Mammary epithelial cell (primary cell): ENCODE measurements at regions of chr4 and their contacts with region 1.

Region 1: DNA sequence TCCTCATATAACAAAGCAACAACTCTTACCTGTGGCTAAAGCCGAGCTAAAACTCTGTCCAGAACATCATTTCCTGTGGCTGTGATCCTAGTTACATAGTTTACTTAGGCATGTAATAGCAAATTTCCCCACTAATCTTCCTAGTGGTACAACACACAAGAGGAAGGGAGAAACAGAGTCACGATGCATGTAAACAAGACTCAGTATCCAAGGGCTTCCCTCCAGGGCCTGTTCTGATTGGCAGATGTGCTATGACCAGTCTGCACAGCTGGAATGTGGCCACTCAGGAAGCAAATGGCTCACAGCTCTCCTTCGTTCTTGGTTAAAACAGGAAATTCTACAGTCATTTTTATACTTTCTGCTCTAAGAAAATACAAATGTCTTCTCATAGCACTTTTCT is 49.2 kb upstream of the PRSS48 start:
- DNase-seq: peak; percentile 84
- H3K4me3 ChIP-seq: peak overlapping the region; percentile 0 to 33 (median 14)
- H3K27ac ChIP-seq: peak overlapping the region; percentile 95
- H3K4me1 ChIP-seq: peaks cover 24% of the 10 kb centered on the region
- H3K27me3 ChIP-seq: no peaks in the 10 kb centered on the region
- CTCF ChIP-seq: no peak

Region 2: GRCh38 chr4:151139814-151140213 is 87.9 kb before region 1 on chr4:
- CTCF ChIA-PET with region 1: no interaction called
- dilution Hi-C with region 1: no loop called
- in situ Hi-C with region 1: no loop called
- intact Hi-C with region 1: no loop called
- DNase-seq: no peak
- H3K4me3 ChIP-seq: no peak overlapping the region
- H3K27ac ChIP-seq: no peak overlapping the region
- H3K4me1 ChIP-seq: no peaks in the 10 kb centered on the region
- H3K27me3 ChIP-seq: no peaks in the 10 kb centered on the region
- CTCF ChIP-seq: no peak

Region 3: DNA sequence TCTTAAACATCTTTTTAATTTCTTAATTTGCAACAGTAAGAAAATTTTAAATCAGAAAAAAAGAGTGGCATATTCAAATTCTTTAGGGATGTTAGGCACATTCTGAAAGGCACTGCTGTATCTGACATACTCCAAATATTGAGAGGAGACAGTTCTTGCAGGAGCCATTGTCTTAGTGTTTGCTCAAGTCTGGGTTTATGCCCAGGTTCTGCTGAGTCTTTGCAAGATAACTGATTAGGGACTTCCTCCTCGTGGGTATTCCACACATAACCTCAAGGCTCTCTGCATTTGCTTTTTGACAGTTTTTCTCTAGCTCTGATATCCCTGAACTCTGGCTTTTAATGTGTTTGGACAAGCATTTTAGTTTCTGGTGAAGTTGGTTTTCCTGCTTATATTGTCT is 75.7 kb before region 1 on chr4:
- CTCF ChIA-PET with region 1: no interaction called
- dilution Hi-C with region 1: loop called (anchors 5 kb)
- in situ Hi-C with region 1: no loop called
- intact Hi-C with region 1: no loop called
- DNase-seq: no peak
- H3K4me3 ChIP-seq: no peak overlapping the region
- H3K27ac ChIP-seq: no peak overlapping the region
- H3K4me1 ChIP-seq: no peaks in the 10 kb centered on the region
- H3K27me3 ChIP-seq: no peaks in the 10 kb centered on the region
- CTCF ChIP-seq: no peak

Region 4: DNA sequence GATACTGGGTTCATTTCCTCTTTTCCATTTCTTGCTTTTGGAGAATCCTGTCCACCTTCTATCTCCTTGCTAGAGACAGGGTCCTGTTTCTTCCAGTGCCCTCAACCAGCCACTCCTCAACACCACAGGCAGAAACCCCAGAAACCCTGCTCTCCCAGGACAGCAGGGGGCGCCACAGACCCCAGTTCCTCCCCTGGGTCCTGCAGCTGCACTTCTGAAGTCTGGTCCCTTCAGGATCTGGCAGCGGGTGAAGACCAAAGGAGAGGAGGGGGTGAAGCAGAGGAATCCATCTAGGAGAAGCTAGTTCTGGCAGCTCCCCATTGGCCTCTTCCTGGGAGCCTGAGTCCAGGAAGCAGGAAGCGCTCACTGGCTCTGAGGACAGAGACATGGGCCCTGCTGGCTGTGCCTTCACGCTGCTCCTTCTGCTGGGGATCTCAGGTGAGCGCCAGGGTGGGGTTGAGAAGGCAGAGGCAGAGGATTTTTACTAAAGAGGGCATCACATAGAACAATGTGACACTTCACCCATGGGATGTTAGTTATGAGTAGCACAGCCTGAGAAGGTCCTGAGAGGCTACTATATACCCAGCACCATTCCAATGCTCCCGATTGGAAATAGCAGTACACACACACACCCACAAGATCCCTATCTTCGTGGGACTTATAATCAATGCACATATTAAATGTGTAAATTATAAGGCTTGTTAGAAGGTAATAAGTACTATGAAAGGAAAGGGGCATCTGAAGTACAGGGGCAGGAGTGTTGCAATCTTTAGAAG is 49.2 kb after region 1 on chr4 and contains the start of gene PRSS48:
- CTCF ChIA-PET with region 1: no interaction called
- dilution Hi-C with region 1: no loop called
- in situ Hi-C with region 1: no loop called
- intact Hi-C with region 1: no loop called
- DNase-seq: peak; percentile 42
- H3K4me3 ChIP-seq: no peak within 1 kb of the TSS
- H3K27ac ChIP-seq: no peak within 1 kb of the TSS
- H3K4me1 ChIP-seq: no peaks in the 10 kb centered on the region
- H3K27me3 ChIP-seq: no peaks in the 10 kb centered on the region
- CTCF ChIP-seq: peak; percentile 65 to 92
- total RNA-seq, gene PRSS48: 0.17 TPM in 1 of 2 donors, not detected in the other

Region 5: GRCh38 chr4:151325111-151325948 is 97.6 kb after region 1 on chr4 and contains the start of gene SH3D19:
- CTCF ChIA-PET with region 1: no interaction called
- dilution Hi-C with region 1: loop called (anchors 5 kb)
- in situ Hi-C with region 1: no loop called
- intact Hi-C with region 1: no loop called
- DNase-seq: peak; percentile 78
- H3K4me3 ChIP-seq: peak within 1 kb of the TSS; percentile 67 to 94 (median 74)
- H3K27ac ChIP-seq: peak within 1 kb of the TSS; percentile 87
- H3K4me1 ChIP-seq: peaks cover 19% of the 10 kb centered on the region
- H3K27me3 ChIP-seq: no peaks in the 10 kb centered on the region
- CTCF ChIP-seq: no peak
- total RNA-seq, gene SH3D19: 42.7 to 69.3 TPM